ENCODE measurements at regions of chr15 and their contacts with region 1.

Region 1: GRCh38 chr15:97909291-97909891 is 51.1 kb upstream of the ARRDC4 start:
- DNase-seq: peak; percentile 77
- H3K4me3 ChIP-seq: no peak overlapping the region
- H3K27ac ChIP-seq: no peak overlapping the region
- H3K4me1 ChIP-seq: no peaks in the 10 kb centered on the region
- H3K27me3 ChIP-seq: no peaks in the 10 kb centered on the region
- CTCF ChIP-seq: peak; percentile 92

Region 2: DNA sequence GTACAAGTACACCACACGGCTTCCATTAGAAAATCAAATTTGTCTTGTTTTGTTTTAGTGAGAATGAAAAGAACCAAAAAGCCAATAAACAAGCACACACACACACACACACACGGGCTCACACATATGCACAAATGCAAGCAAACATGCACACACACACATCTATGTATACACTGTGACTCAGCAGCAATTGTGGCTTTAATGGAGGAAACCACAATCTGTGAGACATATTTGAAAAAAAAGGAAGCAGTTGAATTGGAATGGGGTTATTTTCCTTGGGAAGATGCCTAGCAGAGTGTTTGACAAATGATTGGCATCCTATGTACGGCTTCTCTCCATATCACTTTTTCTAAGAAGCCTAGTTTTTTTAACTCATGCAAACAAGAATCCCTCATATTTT is 150.0 kb before region 1 on chr15:
- intact Hi-C with region 1: no loop called
- DNase-seq: no peak
- H3K4me3 ChIP-seq: no peak overlapping the region
- H3K27ac ChIP-seq: no peak overlapping the region
- H3K4me1 ChIP-seq: no peaks in the 10 kb centered on the region
- H3K27me3 ChIP-seq: no peaks in the 10 kb centered on the region
- CTCF ChIP-seq: no peak

Region 3: DNA sequence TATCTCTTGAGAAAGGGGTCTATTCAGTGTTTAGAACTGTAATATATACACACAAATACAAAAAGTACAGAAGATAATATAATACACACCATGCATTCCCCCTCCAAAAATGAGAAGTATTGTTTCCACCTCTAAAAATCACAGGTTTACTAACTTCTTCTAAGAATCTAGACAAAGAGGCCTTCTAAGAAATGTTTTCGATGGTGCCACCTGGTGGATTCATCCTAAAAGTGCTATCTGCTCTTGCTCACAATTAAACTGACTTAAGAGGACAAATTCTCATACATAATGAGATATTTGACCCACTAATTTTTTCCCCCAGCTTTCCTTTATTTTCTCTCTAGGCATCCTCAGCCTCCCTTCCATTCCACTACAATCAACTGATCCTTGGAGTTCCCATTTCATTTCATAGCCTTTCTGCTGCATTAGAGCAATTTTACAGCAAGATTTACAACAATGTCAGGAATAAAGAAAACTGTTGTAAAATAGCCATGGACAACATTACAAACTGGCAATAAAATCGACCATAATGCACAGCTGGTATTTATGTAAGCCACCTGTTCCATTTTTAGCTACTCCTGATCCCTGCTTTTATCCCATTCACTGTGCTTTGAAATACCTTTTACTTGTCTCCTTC is 175.7 kb after region 1 on chr15:
- intact Hi-C with region 1: loop called (anchors 2 kb)
- DNase-seq: peak; percentile 63
- H3K4me3 ChIP-seq: no peak overlapping the region
- H3K27ac ChIP-seq: no peak overlapping the region
- H3K4me1 ChIP-seq: no peaks in the 10 kb centered on the region
- H3K27me3 ChIP-seq: no peaks in the 10 kb centered on the region
- CTCF ChIP-seq: peak; percentile 51

Region 4: GRCh38 chr15:98177924-98178592 is 268.7 kb after region 1 on chr15:
- intact Hi-C with region 1: loop called (anchors 5 kb)
- DNase-seq: peak; percentile 35
- H3K4me3 ChIP-seq: no peak overlapping the region
- H3K27ac ChIP-seq: no peak overlapping the region
- H3K4me1 ChIP-seq: no peaks in the 10 kb centered on the region
- H3K27me3 ChIP-seq: peaks cover 4% of the 10 kb centered on the region
- CTCF ChIP-seq: peak; percentile 67

Region 5: GRCh38 chr15:98292442-98293240 is 383.2 kb after region 1 on chr15:
- intact Hi-C with region 1: loop called (anchors 5 kb)
- DNase-seq: peak; percentile 61
- H3K4me3 ChIP-seq: no peak overlapping the region
- H3K27ac ChIP-seq: no peak overlapping the region
- H3K4me1 ChIP-seq: no peaks in the 10 kb centered on the region
- H3K27me3 ChIP-seq: no peaks in the 10 kb centered on the region
- CTCF ChIP-seq: peak; percentile 54

Region 6: GRCh38 chr15:98428253-98428989 is 519.0 kb after region 1 on chr15:
- intact Hi-C with region 1: loop called (anchors 10 kb)
- DNase-seq: peak; percentile 73
- H3K4me3 ChIP-seq: peak overlapping the region; percentile 22
- H3K27ac ChIP-seq: no peak overlapping the region
- H3K4me1 ChIP-seq: no peaks in the 10 kb centered on the region
- H3K27me3 ChIP-seq: peaks cover 5% of the 10 kb centered on the region
- CTCF ChIP-seq: peak; percentile 88

Measured in colonic mucosa (tissue), 4 donors.